Activated naive CD4-positive, alpha-beta T cell treated with anti-CD3 and anti-CD28 coated beads, Interleukin-2, amount 10 ng/mL, durations not matched to agents 7 days and 5 days (primary cell): ENCODE measurements at regions of chr10 and their contacts with region 1.

Region 1: DNA sequence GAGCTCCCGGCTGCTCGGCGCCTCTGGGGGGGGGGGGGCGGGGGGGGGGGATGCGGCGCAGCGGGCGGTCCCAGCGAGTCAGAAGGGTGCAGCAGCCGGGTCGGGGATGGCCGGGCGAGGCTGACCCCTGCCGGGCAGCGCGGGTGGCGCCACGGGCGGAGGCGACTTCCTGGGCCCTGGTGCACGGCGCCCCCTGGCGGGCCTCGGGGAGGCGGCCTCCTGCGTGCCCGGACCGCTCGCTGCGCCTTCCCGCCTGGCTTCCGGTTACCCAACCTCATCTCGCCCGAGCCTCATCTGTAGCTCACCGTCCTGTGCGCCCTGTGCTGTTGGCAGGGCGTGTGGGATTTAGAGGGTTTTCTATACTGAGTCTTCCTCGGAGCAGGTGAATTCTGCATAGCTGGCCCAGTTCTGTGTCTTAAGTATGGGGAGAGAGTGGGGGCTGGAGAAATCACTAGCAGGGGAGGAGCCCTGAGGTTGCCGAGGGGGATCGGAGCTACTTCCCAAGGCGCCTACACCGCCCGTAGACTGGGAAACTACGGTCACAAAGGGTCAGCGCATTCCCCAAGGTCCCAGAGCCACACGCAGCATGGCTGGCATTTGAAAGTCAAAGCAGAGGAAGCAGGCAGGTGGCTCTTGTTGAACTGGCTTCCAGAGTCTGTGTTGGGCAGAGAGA is 28.3 kb upstream of the WDFY4 start:
- DNase-seq: peak; percentile 92
- H3K4me3 Mint-ChIP-seq: peak overlapping the region; percentile 66
- H3K27ac Mint-ChIP-seq: peak overlapping the region; percentile 38
- H3K4me1 Mint-ChIP-seq: peaks cover 14% of the 10 kb centered on the region
- H3K27me3 Mint-ChIP-seq: peaks cover 67% of the 10 kb centered on the region

Region 2: DNA sequence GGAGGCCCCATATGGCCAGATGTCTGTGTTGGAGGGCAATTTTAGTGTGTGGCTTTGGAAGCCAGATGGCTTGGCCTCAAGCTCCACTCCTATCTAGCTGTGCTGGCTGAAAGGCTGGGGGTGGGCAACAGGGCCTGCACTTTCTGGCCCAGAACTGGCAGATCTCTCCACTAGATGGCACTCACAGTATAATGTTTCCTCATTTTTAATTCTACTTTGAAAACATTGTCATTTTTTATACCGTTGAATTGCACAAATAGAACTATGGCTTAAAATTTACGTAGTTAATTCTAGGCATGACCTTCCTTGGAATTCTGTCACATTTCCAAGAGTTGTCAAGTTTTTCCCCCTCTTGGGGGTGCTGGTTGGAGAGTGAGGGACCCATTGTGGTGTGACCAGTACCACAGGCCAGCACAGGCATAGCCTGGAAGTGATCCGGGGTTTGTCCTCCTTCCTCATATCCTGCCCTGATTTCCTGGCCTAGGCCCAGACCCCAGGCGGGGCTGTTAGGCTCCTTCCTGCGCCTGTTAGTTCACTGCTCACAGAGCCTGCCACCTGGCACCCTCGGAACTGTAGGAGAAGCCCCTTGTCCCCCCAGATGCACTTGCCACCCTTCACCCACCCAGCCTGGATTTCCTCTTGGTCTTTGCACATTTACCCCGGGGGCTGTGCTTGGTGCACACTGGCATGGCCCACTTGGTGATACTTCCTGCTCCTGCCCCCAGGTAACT is 104.4 kb before region 1 on chr10:
- CTCF ChIA-PET with region 1: interaction called, 42 read pairs
- DNase-seq: peak; percentile 43
- H3K4me3 Mint-ChIP-seq: no peak overlapping the region
- H3K27ac Mint-ChIP-seq: no peak overlapping the region
- H3K4me1 Mint-ChIP-seq: no peaks in the 10 kb centered on the region
- H3K27me3 Mint-ChIP-seq: no peaks in the 10 kb centered on the region

Region 3: DNA sequence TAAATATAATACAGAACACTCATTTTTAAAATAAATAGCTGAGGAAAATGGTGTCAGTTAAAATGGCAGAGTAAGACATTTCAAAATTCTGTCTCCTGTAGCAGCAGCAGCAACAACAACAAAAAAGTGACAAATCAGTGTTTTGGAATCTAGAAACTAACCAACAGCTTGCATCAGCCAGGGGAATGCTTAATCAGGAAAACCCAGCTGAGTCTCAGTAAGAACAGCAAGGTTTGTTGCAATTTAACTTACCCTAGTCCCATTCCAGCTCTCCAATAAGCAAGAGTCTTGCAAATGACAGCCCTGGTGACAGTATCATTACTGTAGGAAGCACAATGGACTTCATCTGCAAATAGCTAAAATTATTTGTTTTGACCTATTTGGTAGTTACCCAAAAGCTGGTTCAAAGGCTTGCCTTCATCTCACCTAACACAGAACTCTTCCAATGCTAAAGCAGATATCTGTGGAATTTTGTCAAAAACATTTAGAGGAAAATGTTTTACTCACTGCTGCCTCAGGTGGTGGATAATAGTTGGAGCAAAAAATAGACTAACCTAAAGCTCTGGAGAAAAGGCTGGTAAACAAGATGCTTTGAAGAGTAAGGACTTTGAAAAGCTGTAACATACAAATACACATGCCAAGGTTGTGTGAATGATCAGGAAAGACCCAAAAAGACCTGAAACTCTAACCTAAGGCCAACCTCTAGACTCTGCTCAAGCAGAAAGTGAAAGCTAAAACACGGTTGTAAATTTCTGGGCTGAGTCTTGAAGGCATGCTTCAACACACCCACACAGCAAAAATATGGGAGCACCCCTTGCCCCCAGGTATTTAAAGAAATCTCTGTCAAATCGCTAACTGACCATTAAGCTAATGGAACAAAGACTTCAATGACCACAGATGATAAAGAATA is 41.6 kb before region 1 on chr10:
- CTCF ChIA-PET with region 1: interaction called, 11 read pairs
- DNase-seq: no peak
- H3K4me3 Mint-ChIP-seq: no peak overlapping the region
- H3K27ac Mint-ChIP-seq: no peak overlapping the region
- H3K4me1 Mint-ChIP-seq: no peaks in the 10 kb centered on the region
- H3K27me3 Mint-ChIP-seq: peaks cover 15% of the 10 kb centered on the region

Region 4: DNA sequence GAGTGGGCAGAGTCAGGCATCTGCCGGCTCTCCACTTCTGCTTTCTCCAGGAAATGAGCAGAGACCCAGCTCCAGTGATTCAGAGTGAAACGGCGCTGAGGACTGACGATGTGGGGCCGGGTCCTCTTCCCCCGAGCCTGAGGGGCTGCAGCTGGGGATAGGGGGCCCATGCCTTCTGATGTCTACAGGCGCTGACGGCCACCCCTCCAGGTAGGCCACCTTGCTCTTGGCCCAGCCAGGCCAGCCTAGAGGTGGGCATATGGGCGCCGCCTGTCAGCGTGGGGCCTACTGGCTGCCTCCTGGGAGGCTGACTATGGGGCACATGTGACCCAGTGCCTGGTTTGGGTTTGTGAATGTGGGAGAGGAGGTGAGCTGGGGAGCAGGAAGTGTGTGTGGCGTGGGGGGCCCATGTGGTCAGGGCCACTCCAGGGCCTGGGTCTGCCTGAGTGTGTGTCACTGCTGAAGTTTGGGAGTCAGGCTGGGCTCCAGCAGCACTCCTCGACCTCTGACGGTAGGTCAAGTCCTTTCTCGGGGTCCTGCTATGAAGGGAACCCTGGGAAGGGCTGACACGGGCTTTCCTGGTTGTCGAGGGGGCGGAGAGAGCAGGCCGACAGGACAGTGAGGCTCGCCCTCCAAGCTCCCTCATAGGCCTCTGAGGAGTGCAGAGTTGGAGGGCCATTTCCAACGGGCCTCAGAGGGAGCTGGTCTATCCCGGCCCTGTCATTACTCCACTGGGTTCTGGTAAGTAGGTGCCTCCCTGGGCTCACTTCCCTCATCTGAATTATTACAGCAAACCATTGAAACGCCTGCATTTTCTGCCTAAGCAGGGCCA is 28.6 kb after region 1 on chr10 and contains the start of gene WDFY4:
- CTCF ChIA-PET with region 1: no interaction called
- DNase-seq: no peak
- H3K4me3 Mint-ChIP-seq: no peak within 1 kb of the TSS
- H3K27ac Mint-ChIP-seq: no peak within 1 kb of the TSS
- H3K4me1 Mint-ChIP-seq: no peaks in the 10 kb centered on the region
- H3K27me3 Mint-ChIP-seq: peaks cover 30% of the 10 kb centered on the region

Region 5: DNA sequence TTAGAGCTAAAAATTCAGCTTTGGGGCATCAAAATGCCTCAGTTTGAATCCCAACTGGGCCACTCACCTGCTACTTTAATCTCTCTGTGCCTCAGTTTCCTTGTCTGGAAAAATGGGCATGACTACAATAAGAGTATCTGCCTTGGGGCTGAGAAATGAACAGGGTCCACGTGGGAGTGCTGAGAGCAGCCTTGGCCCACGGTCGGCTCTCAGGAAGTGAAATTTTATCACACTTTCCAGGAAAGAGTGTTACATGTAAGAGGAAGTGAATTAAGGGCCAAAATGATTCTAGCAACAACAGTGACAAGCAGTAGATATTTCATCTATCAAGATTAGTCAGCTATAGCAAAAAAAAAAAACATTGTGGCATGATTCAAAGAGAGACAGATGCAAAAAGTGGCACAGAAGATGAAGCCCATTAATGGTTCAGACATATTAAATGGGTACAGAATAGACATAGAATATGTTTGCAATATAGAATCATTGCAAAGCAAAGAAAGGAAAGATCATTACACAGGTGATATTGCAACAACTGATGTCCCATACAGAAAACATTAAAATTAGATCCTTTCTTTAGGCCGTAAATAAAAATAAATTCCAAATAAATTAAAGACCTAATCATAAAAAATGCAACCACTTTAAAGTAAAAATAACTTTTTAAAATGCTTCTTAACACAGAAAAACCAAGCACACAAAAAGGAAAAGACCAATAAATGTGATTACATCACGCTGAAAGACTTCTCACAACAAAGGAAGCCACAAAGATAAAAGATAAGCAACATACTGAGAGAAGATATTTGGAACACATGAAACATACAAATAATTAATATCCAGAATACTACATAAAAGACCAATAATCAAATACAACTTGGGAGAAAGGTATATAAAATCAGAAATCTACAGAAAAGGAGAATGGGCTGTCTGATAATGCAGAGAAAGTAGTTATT is 527.5 kb after region 1 on chr10:
- CTCF ChIA-PET with region 1: no interaction called
- DNase-seq: no peak
- H3K4me3 Mint-ChIP-seq: peak overlapping the region; percentile 40
- H3K27ac Mint-ChIP-seq: peak overlapping the region; percentile 89
- H3K4me1 Mint-ChIP-seq: peaks cover 79% of the 10 kb centered on the region
- H3K27me3 Mint-ChIP-seq: peaks cover 18% of the 10 kb centered on the region

Region 6: GRCh38 chr10:49194212-49194920 is 538.0 kb after region 1 on chr10:
- CTCF ChIA-PET with region 1: no interaction called
- DNase-seq: no peak
- H3K4me3 Mint-ChIP-seq: no peak overlapping the region
- H3K27ac Mint-ChIP-seq: peak overlapping the region; percentile 39
- H3K4me1 Mint-ChIP-seq: peaks cover 35% of the 10 kb centered on the region
- H3K27me3 Mint-ChIP-seq: peaks cover 39% of the 10 kb centered on the region

Region 7: GRCh38 chr10:49407552-49408137 is 751.3 kb after region 1 on chr10:
- CTCF ChIA-PET with region 1: interaction called, 15 read pairs
- DNase-seq: peak; percentile 84
- H3K4me3 Mint-ChIP-seq: no peak overlapping the region
- H3K27ac Mint-ChIP-seq: no peak overlapping the region
- H3K4me1 Mint-ChIP-seq: no peaks in the 10 kb centered on the region
- H3K27me3 Mint-ChIP-seq: peaks cover 84% of the 10 kb centered on the region